AG04450 (cell line): ENCODE measurements at regions of chr12 and their contacts with region 1.

Region 1: GRCh38 chr12:109518820-109519665 is 41.6 kb downstream of the UBE3B start:
- DNase-seq: peak; percentile 41
- H3K4me3 ChIP-seq: no peak overlapping the region
- H3K27ac ChIP-seq: peak overlapping the region; percentile 94
- H3K27me3 ChIP-seq: no peaks in the 10 kb centered on the region
- CTCF ChIP-seq: peak; percentile 93

Region 2: DNA sequence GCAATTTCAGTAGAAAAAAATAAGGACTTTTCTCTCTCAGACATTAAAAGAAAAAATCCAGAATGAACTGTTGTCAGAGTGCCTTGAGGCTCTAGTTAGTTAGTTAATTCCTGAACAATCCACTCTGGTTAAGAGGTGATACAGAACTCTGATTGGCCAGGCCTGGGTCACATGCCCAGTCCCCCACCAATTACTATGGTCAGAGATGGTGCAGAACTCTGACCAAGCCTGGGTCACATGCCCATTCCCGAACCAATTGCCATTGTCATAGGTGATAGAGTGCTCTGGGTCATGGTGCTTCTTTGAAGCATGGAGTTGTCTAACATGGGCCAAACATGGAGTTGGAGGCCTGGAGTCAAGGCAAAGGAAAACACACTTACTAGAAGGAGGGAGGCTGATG is 182.4 kb before region 1 on chr12:
- CTCF ChIA-PET with region 1: no interaction called
- POLR2A ChIA-PET with region 1: no interaction called
- DNase-seq: no peak
- H3K4me3 ChIP-seq: no peak overlapping the region
- H3K27ac ChIP-seq: no peak overlapping the region
- H3K27me3 ChIP-seq: peaks cover 3% of the 10 kb centered on the region
- CTCF ChIP-seq: no peak

Region 3: GRCh38 chr12:109477185-109477962 is 41.7 kb before region 1 on chr12 and contains the starts of genes KCTD10 and UBE3B:
- CTCF ChIA-PET with region 1: interaction called, 13 read pairs
- POLR2A ChIA-PET with region 1: interaction called, 3 read pairs
- DNase-seq: peak; percentile 78
- H3K4me3 ChIP-seq: peak within 1 kb of the TSS; percentile 97
- H3K27ac ChIP-seq: peak within 1 kb of the TSS; percentile 98
- H3K27me3 ChIP-seq: no peaks in the 10 kb centered on the region
- CTCF ChIP-seq: no peak
- polyA plus RNA-seq, gene KCTD10: 119 and 128 TPM in 2 replicates
- polyA plus RNA-seq, gene UBE3B: 40.5 and 42.8 TPM in 2 replicates

Region 4: GRCh38 chr12:109539508-109539907 is 20.5 kb after region 1 on chr12:
- CTCF ChIA-PET with region 1: interaction called, 11 read pairs
- POLR2A ChIA-PET with region 1: no interaction called
- DNase-seq: no peak
- H3K4me3 ChIP-seq: no peak overlapping the region
- H3K27ac ChIP-seq: no peak overlapping the region
- H3K27me3 ChIP-seq: no peaks in the 10 kb centered on the region
- CTCF ChIP-seq: no peak

Region 5: DNA sequence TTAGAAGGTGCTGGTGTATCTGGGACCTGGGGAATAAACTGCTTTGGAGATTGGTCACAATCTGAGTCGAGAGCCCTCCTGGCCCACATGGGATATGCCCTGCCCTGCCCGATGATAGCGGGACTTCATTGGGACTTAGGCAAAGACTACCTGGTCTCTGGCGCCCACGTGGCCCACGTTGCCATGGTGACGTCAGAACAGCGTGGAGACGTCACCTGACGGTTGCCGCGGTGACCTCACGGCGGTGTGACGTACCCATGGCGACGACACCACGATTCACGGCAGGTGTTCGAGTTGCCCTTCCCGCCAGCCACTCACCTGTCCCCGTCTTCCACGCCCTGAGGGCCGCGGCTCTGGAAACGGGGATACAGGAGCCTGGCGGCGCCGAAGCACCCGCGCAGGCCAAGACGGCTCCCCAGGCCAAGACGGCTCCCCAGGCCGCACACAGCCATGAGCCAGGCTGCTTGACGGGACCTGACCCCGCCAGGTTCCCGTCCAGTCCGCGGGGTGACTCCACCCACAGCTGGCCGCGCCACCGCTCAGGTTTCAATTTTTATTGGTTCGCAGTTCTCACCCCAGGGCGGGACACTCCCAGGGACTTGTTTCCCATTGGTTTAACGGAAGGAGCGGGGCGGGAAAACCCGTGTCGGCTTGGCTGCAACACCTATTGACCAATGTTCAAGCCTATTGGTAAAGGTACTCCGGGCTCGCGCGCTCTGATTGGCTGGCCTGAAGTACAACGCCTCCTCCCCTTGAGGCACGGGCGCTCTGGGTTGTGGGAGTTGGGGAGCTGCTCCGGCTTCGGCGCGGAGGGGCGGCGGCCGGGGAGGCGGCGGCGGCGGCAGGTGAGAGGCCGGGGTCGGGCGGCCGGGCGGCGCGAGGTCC is 54.2 kb after region 1 on chr12 and contains the starts of genes MMAB and MVK:
- CTCF ChIA-PET with region 1: interaction called, 16 read pairs
- POLR2A ChIA-PET with region 1: no interaction called
- DNase-seq: peak; percentile 96
- H3K4me3 ChIP-seq: peak within 1 kb of the TSS; percentile 78
- H3K27ac ChIP-seq: peak within 1 kb of the TSS; percentile 68
- H3K27me3 ChIP-seq: no peaks in the 10 kb centered on the region
- CTCF ChIP-seq: no peak
- polyA plus RNA-seq, gene MMAB: 13.0 and 15.1 TPM in 2 replicates
- polyA plus RNA-seq, gene MVK: 4.7 and 5.9 TPM in 2 replicates

Region 6: GRCh38 chr12:109775172-109775881 is 256.3 kb after region 1 on chr12:
- CTCF ChIA-PET with region 1: interaction called, 92 read pairs
- POLR2A ChIA-PET with region 1: no interaction called
- DNase-seq: peak; percentile 30
- H3K4me3 ChIP-seq: no peak overlapping the region
- H3K27ac ChIP-seq: no peak overlapping the region
- H3K27me3 ChIP-seq: peaks cover 6% of the 10 kb centered on the region
- CTCF ChIP-seq: peak; percentile 96